Pancreas (tissue), 10 donors: ENCODE measurements at regions of chr7 and their contacts with region 1.

Region 1: DNA sequence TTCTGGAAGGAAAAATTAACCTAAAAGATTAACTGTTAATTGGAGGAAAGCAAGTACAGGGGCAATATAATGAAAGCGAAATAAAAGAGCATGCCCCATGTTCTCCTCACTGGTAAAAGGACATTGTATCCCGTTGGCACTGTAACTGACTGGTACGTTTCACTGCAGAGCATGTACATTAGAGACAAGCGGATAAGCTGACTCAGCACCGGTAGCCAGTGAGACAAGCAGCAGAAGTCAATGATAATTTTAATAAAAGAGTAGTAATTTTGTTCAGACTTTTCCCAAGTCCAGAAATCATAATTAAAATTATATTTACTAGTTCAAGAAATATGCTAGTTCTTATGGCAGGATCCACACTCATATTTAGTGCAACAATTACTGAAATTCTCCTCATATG is 161.5 kb upstream of the VWC2 start:
- DNase-seq: no peak
- ATAC-seq: no peak
- H3K4me3 ChIP-seq: no peak overlapping the region
- H3K27ac ChIP-seq: no peak overlapping the region
- H3K4me1 ChIP-seq: no peaks in the 10 kb centered on the region
- H3K27me3 ChIP-seq: no peaks in the 10 kb centered on the region
- CTCF ChIP-seq: no peak

Region 2: DNA sequence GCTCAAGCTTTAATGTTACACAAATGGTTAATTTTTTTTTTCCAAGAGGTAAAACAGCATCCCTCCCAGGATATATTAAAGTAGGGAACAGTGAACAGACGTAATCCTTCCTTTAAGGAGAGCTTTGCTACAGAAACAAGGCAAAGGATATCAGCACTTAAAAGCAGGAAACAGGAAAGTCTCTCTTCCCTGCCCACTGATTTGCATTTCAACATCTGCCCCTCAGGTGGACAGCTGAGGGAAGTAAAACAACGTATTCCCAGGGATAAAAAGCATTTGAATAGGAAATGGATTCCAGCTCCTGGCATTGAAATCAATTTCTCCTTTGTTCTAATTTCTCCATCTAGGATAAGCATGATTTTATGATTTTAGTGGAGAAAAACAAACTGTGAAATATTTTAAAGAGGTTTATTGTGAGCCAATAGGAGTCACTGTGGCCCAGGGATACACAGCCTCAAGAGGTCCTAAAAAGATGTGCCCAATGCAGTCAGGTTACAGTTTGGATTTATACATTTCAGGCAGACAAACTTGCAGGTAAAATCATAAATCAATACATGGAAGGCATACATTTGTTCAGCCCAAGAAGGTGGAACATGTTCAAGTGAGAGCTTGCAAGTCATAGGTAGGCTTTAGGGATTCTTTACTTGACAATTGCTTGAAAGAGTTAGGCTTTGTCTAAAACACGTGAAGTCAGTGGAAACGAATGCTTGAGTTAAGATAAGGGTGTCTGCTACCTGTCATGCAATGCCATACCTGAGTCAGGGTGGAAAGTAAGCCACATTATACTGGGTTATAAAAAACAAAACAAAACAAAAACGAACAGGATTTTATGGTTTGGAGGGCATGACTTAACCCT is 124.7 kb before region 1 on chr7:
- intact Hi-C with region 1: loop called in 1 of 3 experiments (anchors 5 kb)
- DNase-seq: no peak
- ATAC-seq: no peak
- H3K4me3 ChIP-seq: no peak overlapping the region
- H3K27ac ChIP-seq: no peak overlapping the region
- H3K4me1 ChIP-seq: no peaks in the 10 kb centered on the region
- H3K27me3 ChIP-seq: no peaks in the 10 kb centered on the region
- CTCF ChIP-seq: no peak